ENCODE measurements at regions of chr1 and their contacts with region 1.

Region 1: DNA sequence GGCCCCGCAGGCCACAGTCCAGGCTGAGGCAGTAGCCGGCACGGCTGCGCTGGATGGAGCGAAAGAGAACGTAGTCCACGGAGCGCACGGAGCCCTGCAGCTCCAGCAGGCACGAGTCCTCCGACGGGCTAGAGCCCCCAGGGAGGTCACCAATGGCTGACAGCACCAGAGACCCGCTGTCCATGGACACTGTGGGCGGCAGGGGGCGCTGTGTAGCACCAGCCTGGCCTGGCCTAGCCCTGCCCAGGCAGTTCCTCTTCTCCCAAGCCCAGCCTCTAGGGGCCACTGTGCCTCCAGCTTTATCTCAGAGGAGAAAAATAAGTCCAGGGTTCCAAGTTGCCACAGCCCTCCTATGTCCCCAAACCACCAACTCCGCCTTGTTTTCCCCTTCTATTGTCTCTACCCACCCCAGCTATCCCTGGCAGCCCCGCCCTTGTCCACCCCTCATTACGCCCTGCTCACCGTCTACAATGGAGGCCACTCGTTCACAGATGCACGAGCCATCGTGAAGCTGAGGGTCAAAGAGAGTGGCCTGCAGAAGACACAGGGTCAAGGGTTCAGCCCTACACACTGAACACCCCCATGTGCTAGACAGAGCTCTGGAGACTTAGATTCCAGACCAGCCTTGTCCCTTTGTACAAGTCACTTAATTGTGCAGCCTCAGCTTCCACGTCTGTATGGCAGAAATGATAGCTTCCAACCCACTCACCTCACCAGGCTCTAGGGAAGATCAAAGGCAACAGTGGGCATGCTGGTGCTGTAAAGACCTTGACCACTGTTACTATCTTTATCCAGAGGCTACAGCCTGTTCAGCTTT is 4.4 kb downstream of the ENTREP3 start:
- DNase-seq: peak; percentile 98
- ATAC-seq: peak; percentile 95
- H3K4me3 Mint-ChIP-seq: peak overlapping the region; percentile 60
- H3K27ac Mint-ChIP-seq: peak overlapping the region; percentile 62
- H3K4me1 Mint-ChIP-seq: peaks cover 30% of the 10 kb centered on the region
- H3K27me3 Mint-ChIP-seq: no peaks in the 10 kb centered on the region
- CTCF ChIP-seq: peak; percentile 99

Region 2: GRCh38 chr1:154992721-154993571 is 257.9 kb before region 1 on chr1:
- CTCF ChIA-PET with region 1: no interaction called
- POLR2A ChIA-PET with region 1: no interaction called
- intact Hi-C with region 1: no loop called
- DNase-seq: no peak
- ATAC-seq: no peak
- H3K4me3 Mint-ChIP-seq: no peak overlapping the region
- H3K27ac Mint-ChIP-seq: no peak overlapping the region
- H3K4me1 Mint-ChIP-seq: peaks cover 29% of the 10 kb centered on the region
- H3K27me3 Mint-ChIP-seq: no peaks in the 10 kb centered on the region
- CTCF ChIP-seq: no peak

Region 3: GRCh38 chr1:155193275-155193990 is 57.4 kb before region 1 on chr1:
- CTCF ChIA-PET with region 1: interaction called, 13 read pairs
- POLR2A ChIA-PET with region 1: interaction called, 4 read pairs
- intact Hi-C with region 1: no loop called
- DNase-seq: peak; percentile 84
- ATAC-seq: peak; percentile 62
- H3K4me3 Mint-ChIP-seq: peak overlapping the region; percentile 90
- H3K27ac Mint-ChIP-seq: peak overlapping the region; percentile 99
- H3K4me1 Mint-ChIP-seq: peaks cover 28% of the 10 kb centered on the region
- H3K27me3 Mint-ChIP-seq: no peaks in the 10 kb centered on the region
- CTCF ChIP-seq: peak; percentile 98

Region 4: DNA sequence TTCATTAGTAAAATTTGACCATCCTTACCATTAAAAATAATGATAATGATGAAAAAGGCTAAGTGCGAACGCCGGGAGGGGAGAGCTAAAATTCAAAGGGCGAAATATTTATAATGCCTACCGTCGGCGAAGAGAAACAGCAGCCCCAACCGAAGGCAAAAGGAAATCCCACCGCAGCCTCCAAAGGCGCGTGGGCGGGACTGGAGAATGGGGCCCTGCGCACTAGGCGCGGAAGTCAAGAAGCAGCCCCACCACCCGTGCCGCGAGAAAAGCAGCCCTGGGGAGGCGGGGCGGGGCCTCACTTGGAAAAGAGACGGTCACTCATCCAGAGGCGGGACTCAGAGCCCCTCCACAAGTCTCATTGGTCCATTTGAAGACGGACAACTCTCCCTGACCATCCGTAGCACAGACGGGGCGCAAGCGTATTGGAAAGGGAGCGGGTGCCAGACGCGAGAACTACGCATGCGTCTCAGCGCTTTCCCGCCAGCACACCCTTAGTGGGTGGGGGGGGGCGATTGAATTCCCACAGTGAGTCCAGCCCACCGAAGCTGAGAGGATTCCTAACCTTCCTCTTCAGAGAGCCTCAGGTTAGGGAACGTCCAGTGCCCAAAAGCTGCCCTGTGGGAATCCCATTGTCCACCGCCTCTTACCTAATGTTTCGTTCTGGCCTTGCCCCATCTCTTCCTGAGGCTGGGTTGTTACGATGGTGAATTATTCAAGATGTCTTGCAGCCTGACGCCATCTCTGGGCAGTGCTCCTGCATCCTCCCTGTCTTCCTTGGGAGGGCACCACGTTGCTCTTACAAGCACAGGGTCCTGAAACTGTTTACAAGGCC is 23.4 kb before region 1 on chr1:
- CTCF ChIA-PET with region 1: interaction called, 18 read pairs
- POLR2A ChIA-PET with region 1: interaction called, 23 read pairs
- intact Hi-C with region 1: no loop called
- DNase-seq: peak; percentile 100
- ATAC-seq: peak; percentile 98
- H3K4me3 Mint-ChIP-seq: peak overlapping the region; percentile 91
- H3K27ac Mint-ChIP-seq: peak overlapping the region; percentile 99
- H3K4me1 Mint-ChIP-seq: peaks cover 37% of the 10 kb centered on the region
- H3K27me3 Mint-ChIP-seq: no peaks in the 10 kb centered on the region
- CTCF ChIP-seq: no peak

Region 5: GRCh38 chr1:155277070-155277895 is 26.4 kb after region 1 on chr1 and contains the start of gene HCN3:
- CTCF ChIA-PET with region 1: interaction called, 232 read pairs
- POLR2A ChIA-PET with region 1: interaction called, 20 read pairs
- intact Hi-C with region 1: no loop called
- DNase-seq: peak; percentile 96
- ATAC-seq: peak; percentile 72
- H3K4me3 Mint-ChIP-seq: peak within 1 kb of the TSS; percentile 54
- H3K27ac Mint-ChIP-seq: no peak within 1 kb of the TSS
- H3K4me1 Mint-ChIP-seq: peaks cover 29% of the 10 kb centered on the region
- H3K27me3 Mint-ChIP-seq: no peaks in the 10 kb centered on the region
- CTCF ChIP-seq: peak; percentile 73
- total RNA-seq, gene HCN3: 1.5 TPM

Region 6: DNA sequence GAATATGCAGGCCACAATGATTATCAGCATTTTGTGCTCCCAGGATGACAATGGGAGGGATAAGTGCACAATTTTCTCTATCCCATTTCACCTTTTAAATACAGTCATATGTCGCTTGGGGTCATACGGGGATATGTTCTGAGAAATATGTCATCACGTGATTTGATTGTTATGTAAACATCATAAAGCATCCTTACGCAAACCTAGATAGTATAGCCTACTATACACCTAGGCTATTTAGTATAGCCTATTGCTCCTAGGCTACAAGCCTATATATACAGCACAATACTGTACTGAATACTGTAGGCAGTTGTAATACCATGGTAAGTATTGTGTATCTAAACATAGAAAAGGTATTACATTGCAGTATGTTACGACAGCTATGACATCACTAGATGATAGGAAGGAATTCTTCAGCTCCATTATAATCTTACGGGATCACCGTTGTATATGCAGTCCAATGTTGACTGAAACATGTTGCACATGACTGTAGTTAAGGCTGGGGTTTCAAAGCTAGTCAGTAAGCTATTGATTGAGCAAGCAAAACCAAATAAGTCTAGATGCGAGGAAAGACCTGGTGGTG is 88.8 kb after region 1 on chr1:
- CTCF ChIA-PET with region 1: interaction called, 16 read pairs
- POLR2A ChIA-PET with region 1: no interaction called
- intact Hi-C with region 1: no loop called
- DNase-seq: no peak
- ATAC-seq: no peak
- H3K4me3 Mint-ChIP-seq: no peak overlapping the region
- H3K27ac Mint-ChIP-seq: no peak overlapping the region
- H3K4me1 Mint-ChIP-seq: peaks cover 3% of the 10 kb centered on the region
- H3K27me3 Mint-ChIP-seq: no peaks in the 10 kb centered on the region
- CTCF ChIP-seq: no peak

Region 7: DNA sequence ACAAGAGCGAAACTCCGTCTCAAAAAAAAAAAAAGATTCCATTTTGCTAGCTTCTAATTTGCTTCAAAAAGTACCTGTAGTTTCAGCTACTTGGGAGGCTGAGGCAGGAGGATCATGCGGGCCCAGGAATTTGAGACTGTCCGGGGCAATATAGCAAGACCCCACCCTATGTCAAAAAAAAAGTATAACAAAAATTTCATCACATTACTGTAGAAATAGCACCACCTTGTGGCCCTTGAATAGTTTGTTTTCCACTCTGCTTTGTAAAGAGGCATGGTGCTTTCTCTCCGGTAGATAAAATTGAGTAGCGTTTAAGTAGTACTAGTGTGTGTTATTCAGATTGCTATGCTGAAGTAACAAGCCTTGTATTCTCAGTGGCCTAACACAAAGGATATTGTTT is 340.9 kb after region 1 on chr1:
- CTCF ChIA-PET with region 1: interaction called, 19 read pairs
- POLR2A ChIA-PET with region 1: no interaction called
- intact Hi-C with region 1: loop called (anchors 10 kb)
- DNase-seq: peak; percentile 34
- ATAC-seq: peak; percentile 75
- H3K4me3 Mint-ChIP-seq: no peak overlapping the region
- H3K27ac Mint-ChIP-seq: no peak overlapping the region
- H3K4me1 Mint-ChIP-seq: peaks cover 2% of the 10 kb centered on the region
- H3K27me3 Mint-ChIP-seq: no peaks in the 10 kb centered on the region
- CTCF ChIP-seq: peak; percentile 76

Measured in activated CD8-positive, alpha-beta T cell treated with anti-CD3 and anti-CD28 coated beads for 36 hours (primary cell).